ENCODE measurements at regions of chr1 and their contacts with region 1.

Region 1: GRCh38 chr1:42335050-42335808 is at the start of gene FOXJ3:
- DNase-seq: peak; percentile 84 to 94
- H3K4me3 ChIP-seq: peak within 1 kb of the TSS; percentile 85
- H3K27ac ChIP-seq: peak within 1 kb of the TSS; percentile 84
- H3K4me1 ChIP-seq: peaks cover 58% of the 10 kb centered on the region
- H3K27me3 ChIP-seq: no peaks in the 10 kb centered on the region
- CTCF ChIP-seq: no peak
- total RNA-seq, gene FOXJ3: 46.7 and 60.4 TPM in 2 replicates

Region 2: DNA sequence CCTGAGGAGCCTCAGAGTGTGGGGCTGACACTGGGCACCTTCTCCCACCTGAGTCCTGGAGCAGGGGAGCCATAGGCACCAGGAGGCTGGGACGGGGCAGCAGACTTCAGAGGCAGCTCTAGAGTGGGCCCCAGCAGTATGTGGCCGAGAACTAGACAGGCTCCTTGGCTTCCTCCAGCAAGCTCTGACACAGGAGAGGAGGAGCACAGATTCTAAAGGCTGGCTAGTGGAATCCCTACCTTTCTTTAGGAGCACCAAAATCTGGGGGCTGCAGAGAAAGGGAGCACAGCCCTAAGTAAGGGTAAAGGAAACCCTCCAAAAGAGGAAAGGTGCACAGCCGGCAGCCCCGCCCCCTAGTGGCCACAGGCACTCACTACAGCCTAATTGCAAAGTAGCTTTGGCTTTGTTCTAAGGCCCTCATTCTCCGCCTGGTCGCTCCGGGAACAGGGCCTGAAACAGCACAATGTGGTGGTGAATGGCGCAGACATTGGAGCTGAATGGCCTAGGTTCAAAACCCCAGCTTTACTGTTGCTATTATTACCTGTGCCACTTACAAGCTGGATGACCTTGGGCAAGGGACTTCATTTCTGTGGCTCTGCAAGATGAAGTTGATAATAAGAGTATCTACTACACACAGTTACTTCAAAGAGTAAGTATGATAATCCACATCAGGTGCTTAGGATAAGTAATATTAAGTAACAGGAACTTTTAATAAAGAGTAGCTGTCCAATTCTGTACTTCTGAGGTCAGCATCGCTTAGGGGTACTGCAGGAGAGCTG is 161.9 kb before region 1 on chr1:
- CTCF ChIA-PET with region 1: interaction called, 3 read pairs
- POLR2A ChIA-PET with region 1: no interaction called
- intact Hi-C with region 1: loop called (anchors 1 kb)
- DNase-seq: peak in 1 of 2 experiments; percentile 65
- H3K4me3 ChIP-seq: no peak overlapping the region
- H3K27ac ChIP-seq: 0 out of 2 replicates have a peak overlapping the region, but pooled peaks have one; percentile 1
- H3K4me1 ChIP-seq: peaks cover 47% of the 10 kb centered on the region
- H3K27me3 ChIP-seq: no peaks in the 10 kb centered on the region
- CTCF ChIP-seq: peak; percentile 98

Region 3: GRCh38 chr1:42266253-42267135 is 68.7 kb before region 1 on chr1:
- CTCF ChIA-PET with region 1: no interaction called
- POLR2A ChIA-PET with region 1: no interaction called
- intact Hi-C with region 1: loop called (anchors 5 kb)
- DNase-seq: peak; percentile 42 to 85
- H3K4me3 ChIP-seq: peak overlapping the region; percentile 31; the same call in 1 of the 2 replicates
- H3K27ac ChIP-seq: peak overlapping the region; percentile 61
- H3K4me1 ChIP-seq: peaks cover 35% of the 10 kb centered on the region
- H3K27me3 ChIP-seq: no peaks in the 10 kb centered on the region
- CTCF ChIP-seq: peak; percentile 46; the same call in 1 of the 2 replicates

Region 4: GRCh38 chr1:42462828-42463763 is 127.9 kb after region 1 on chr1 and contains the start of gene CCDC30:
- CTCF ChIA-PET with region 1: interaction called, 14 read pairs
- POLR2A ChIA-PET with region 1: no interaction called
- intact Hi-C with region 1: no loop called
- DNase-seq: peak; percentile 99
- H3K4me3 ChIP-seq: peak within 1 kb of the TSS; percentile 73
- H3K27ac ChIP-seq: peak within 1 kb of the TSS; percentile 36; the same call in 1 of the 2 replicates
- H3K4me1 ChIP-seq: peaks cover 20% of the 10 kb centered on the region
- H3K27me3 ChIP-seq: no peaks in the 10 kb centered on the region
- CTCF ChIP-seq: no peak
- total RNA-seq, gene CCDC30: 6.9 and 10.2 TPM in 2 replicates

Region 5: GRCh38 chr1:42576935-42577334 is 241.7 kb after region 1 on chr1:
- CTCF ChIA-PET with region 1: no interaction called
- POLR2A ChIA-PET with region 1: no interaction called
- intact Hi-C with region 1: loop called (anchors 10 kb)
- DNase-seq: no peak
- H3K4me3 ChIP-seq: no peak overlapping the region
- H3K27ac ChIP-seq: no peak overlapping the region
- H3K4me1 ChIP-seq: no peaks in the 10 kb centered on the region
- H3K27me3 ChIP-seq: no peaks in the 10 kb centered on the region
- CTCF ChIP-seq: no peak